HEK293 (cell line): ENCODE measurements at regions of chr2 and their contacts with region 1.

Region 1: DNA sequence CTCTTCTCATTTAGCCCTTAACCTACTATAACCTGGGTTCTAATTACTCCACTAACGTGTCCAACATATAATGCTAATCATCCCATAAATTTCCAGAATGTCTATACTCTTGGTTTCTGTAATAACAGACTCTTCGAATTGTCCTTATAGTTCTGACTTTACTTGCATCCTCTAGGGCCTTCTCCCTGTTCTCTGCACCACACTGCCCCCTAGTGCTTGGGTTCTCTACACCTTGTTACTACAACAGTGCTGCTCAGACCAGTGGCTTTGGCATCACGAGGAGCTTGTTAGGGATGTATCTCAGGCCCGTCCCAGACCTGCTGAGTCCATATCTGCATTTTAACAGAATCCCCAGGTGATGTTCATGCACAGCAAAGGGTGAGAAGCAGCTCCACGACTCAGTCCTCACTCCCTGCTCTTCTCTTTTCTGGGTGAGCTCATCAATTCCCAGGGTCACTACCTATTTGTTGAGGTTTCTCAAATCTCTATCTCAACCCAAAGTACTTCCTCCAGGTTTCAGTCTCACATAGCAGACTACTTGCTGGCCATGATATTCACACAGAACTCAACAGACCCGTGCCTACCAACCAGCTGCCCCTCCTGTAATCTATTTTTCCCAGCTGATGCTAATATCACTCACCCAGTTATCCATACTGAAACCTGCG is 14.5 kb upstream of the DDX1 start:
- H3K4me3 ChIP-seq: no peak overlapping the region
- H3K27ac ChIP-seq: no peak overlapping the region
- H3K4me1 ChIP-seq: no peaks in the 10 kb centered on the region
- CTCF ChIP-seq: peak; percentile 84

Region 2: GRCh38 chr2:15120631-15121030 is 456.6 kb before region 1 on chr2:
- CTCF ChIA-PET with region 1: interaction called, 12 read pairs
- POLR2A ChIA-PET with region 1: no interaction called
- H3K4me3 ChIP-seq: no peak overlapping the region
- H3K27ac ChIP-seq: no peak overlapping the region
- H3K4me1 ChIP-seq: no peaks in the 10 kb centered on the region
- CTCF ChIP-seq: no peak

Region 3: GRCh38 chr2:15334650-15335326 is 242.4 kb before region 1 on chr2:
- CTCF ChIA-PET with region 1: no interaction called
- POLR2A ChIA-PET with region 1: no interaction called
- H3K4me3 ChIP-seq: no peak overlapping the region
- H3K27ac ChIP-seq: no peak overlapping the region
- H3K4me1 ChIP-seq: peaks cover 9% of the 10 kb centered on the region; the same call in 1 of the 2 replicates
- CTCF ChIP-seq: no peak

Region 4: DNA sequence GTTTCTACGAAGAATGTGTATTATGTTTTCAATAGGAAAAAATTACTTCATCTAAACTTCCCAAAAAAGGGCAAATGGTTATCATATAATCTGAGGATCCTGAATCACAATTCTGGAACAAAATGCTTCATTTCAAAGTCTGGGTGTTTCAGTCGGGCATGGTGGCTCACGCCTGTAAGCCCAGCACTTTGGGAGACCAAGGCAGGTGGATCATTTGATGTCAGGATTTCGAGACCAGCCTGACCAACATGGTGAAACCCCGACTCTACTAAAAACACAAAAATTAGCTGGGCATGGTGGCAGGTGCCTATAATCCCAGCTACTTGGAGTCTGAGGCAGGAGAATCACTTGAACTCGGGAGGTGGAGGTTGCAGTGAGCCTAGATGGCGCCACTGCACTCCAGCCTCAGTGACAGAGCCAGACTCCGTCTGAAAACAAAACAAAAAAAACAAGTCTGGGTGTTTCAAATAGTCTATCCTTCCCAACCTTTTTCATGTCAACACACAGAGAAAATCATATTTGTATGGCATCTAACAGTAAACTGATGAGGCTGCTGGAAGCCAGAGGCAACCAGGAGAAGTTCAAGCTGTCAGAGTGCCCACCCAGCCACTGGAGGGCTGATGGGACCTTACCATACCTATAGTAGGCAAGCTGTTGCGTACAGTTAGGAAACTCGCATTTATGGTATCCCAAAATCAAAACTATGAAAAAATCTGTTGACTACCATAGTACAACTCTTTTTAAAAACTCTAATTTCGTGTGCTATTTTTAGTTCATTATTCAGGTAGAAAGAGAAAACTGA is 30.7 kb before region 1 on chr2:
- CTCF ChIA-PET with region 1: interaction called, 13 read pairs
- POLR2A ChIA-PET with region 1: no interaction called
- H3K4me3 ChIP-seq: no peak overlapping the region
- H3K27ac ChIP-seq: no peak overlapping the region
- H3K4me1 ChIP-seq: no peaks in the 10 kb centered on the region
- CTCF ChIP-seq: no peak

Region 5: DNA sequence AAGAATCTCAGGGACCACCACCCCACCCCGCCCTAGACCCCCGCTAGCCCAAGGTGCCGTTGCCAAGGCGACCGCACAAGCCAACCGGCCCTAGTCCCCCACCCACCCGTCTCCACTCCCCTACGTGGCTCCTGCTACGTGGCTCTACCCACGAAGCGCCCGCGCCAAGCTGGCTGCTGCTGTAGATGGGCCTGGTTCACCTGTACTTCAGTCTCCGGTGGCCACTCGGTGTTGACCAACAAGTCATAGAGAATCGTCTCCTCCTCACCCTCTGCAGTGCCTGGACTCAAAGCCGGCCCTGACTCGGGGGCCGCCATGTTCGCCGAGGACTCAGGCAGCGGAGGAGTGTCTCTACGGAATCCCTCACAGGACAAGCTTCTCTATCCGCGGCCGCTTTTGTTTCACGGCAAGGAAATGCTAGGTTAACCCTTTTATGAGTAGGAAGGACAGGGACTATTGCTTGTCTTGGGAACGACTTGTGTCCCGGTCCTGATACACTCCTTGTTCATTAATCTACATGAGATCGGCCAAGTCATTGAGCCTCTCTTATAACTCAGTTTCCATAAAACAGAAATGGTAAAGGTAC is 16.1 kb before region 1 on chr2 and contains the start of gene NBAS:
- CTCF ChIA-PET with region 1: interaction called, 18 read pairs
- POLR2A ChIA-PET with region 1: interaction called, 5 read pairs
- H3K4me3 ChIP-seq: peak within 1 kb of the TSS; percentile 99
- H3K27ac ChIP-seq: peak within 1 kb of the TSS; percentile 58
- H3K4me1 ChIP-seq: no peaks in the 10 kb centered on the region
- CTCF ChIP-seq: no peak

Region 6: DNA sequence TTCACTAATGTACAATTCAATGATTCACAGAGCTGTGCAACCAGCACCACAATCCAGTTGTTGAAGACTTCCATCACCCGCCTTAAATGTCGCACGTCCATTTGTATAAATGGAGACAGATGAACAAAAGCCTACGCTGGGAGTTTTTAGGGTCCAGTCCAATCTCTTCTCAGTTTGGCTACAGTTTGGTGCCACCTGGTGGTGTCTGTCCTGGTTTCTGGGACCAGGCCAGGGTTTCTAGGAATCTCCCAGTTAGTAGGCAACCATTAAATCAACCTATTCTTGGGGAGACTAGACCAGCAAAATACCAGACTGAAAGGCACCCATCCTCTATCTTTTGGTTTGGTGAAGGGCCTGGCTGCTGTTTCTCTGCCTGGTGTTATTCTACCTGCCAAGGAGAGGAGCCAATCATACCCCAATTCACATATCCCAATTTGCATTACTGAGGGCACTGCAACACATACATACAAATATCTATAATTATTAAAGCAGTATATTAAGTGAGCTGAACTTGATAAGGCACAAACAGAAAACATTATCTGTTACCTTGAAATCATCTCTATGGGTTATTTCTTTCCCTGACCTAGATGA is 11.2 kb after region 1 on chr2:
- CTCF ChIA-PET with region 1: interaction called, 39 read pairs
- POLR2A ChIA-PET with region 1: no interaction called
- H3K4me3 ChIP-seq: no peak overlapping the region
- H3K27ac ChIP-seq: no peak overlapping the region
- H3K4me1 ChIP-seq: no peaks in the 10 kb centered on the region
- CTCF ChIP-seq: peak; percentile 29; the same call in 1 of the 2 replicates

Region 7: DNA sequence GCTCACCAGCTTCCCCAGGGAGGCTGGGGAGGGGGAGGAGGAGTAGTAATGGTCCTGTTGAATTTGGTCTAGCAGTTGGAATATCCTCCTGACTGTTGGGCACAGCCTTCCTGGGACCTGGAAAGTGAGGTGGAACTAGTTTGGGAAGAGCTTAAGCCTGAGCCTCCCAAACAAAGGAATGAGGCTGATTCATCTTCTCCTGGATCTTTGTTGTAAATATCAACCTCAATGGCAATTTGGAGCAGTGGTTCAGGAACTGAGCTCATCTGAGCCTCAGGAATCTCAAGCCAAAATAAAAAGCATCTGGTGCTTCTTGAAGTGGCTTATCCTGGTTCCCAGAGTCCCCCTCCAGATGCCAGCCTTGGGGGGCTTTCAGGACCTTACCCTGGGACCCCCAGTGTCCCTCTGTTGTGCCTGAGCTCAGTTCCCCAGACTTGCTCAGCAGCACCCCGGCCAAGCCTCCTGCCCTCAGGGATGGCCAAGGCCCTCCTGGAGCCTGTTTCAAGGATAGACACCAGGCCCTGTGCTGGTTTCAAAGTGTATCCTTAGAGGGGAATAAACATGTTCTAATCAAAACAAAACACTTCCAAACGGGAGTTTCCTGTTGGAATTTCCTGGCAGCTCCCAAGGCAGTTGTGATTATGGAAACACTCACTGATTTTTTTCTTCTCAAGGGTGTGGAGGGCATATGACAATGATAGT is 127.0 kb after region 1 on chr2:
- CTCF ChIA-PET with region 1: no interaction called
- POLR2A ChIA-PET with region 1: no interaction called
- H3K4me3 ChIP-seq: no peak overlapping the region
- H3K27ac ChIP-seq: no peak overlapping the region
- H3K4me1 ChIP-seq: no peaks in the 10 kb centered on the region
- CTCF ChIP-seq: no peak

Region 8: DNA sequence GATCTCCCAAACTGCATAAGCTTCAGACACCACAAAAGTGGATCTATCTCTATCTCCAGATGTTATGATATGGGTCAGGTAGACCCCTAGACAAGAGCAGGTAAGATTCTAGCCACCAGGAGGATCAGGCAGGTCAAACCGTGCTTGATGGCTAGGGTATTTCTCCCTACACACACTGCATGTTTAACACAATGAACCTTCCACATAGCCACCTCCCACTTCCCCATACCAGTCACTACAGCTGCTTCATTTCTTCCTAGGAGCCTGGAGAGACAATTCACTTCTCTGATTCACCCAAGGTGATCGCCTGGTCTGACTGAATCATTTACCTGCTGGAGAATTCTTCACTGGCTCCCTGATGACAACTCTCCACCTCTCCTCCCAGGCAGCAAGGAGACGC is 297.1 kb after region 1 on chr2:
- CTCF ChIA-PET with region 1: no interaction called
- POLR2A ChIA-PET with region 1: no interaction called
- H3K4me3 ChIP-seq: no peak overlapping the region
- H3K27ac ChIP-seq: no peak overlapping the region
- H3K4me1 ChIP-seq: no peaks in the 10 kb centered on the region
- CTCF ChIP-seq: no peak